ENCODE measurements at regions of chr6 and their contacts with region 1.

Region 1: DNA sequence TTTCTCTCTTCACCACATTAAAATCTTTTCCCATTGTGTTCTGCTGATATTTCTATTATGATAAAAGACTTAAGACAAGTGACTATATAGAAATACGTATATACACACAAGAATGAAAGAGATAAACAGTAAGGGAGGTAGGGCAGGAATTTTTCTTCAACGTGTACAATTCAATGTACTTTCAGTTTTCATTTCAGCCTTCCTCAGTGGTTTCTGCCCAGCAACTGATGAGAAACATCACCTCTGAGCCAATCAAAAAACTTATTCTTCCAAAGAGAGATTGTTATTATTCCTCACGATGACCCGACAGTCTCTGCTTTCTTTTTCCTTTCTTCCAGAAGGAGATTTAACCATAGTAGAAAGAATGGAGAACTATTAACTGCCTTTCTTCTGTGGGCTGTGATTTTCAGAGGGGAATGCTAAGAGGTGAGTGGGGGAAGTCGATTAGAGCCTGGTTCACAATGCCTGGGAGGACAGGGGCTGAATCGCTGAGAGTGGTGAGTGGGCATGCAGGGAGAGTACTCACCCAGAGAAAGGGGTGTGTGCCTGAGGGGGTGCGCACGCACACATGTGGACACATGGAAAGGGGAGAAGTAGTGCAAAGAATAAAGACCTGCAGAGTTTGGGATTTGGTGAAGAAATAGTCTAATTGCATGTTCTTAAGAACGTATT is at the start of gene BTN3A1:
- DNase-seq: peak; percentile 80 to 84 (median 81)
- H3K4me3 ChIP-seq: peak within 1 kb of the TSS; percentile 91 to 94
- H3K4me3 Mint-ChIP-seq: peak within 1 kb of the TSS; percentile 97 to 100 (median 99)
- H3K27ac ChIP-seq: peak within 1 kb of the TSS; percentile 89
- H3K27ac Mint-ChIP-seq: peak within 1 kb of the TSS; percentile 95 to 100 (median 99)
- H3K4me1 ChIP-seq: peaks cover 51% of the 10 kb centered on the region
- H3K4me1 Mint-ChIP-seq: peaks cover 41 to 58% (median 47%) of the 10 kb centered on the region in 4 donors
- H3K27me3 ChIP-seq: no peaks in the 10 kb centered on the region
- H3K27me3 Mint-ChIP-seq: no peaks in the 10 kb centered on the region
- total RNA-seq, gene BTN3A1: 255 to 262 TPM

Region 2: GRCh38 chr6:26322645-26323482 is 79.3 kb before region 1 on chr6:
- CTCF ChIA-PET with region 1: no interaction called
- POLR2A ChIA-PET with region 1: no interaction called
- intact Hi-C with region 1: no loop called
- DNase-seq: peak; percentile 75 to 80 (median 79)
- H3K4me3 ChIP-seq: peak overlapping the region in 1 of 2 donors; percentile 62
- H3K4me3 Mint-ChIP-seq: peak overlapping the region; percentile 86 to 92 (median 88)
- H3K27ac ChIP-seq: no peak overlapping the region
- H3K27ac Mint-ChIP-seq: peak overlapping the region; percentile 42 to 98 (median 82)
- H3K4me1 ChIP-seq: peaks cover 12% of the 10 kb centered on the region
- H3K4me1 Mint-ChIP-seq: peaks cover 19 to 30% (median 24%) of the 10 kb centered on the region in 4 donors
- H3K27me3 ChIP-seq: no peaks in the 10 kb centered on the region
- H3K27me3 Mint-ChIP-seq: peaks cover 8 to 22% of the 10 kb centered on the region in 2 donors

Region 3: DNA sequence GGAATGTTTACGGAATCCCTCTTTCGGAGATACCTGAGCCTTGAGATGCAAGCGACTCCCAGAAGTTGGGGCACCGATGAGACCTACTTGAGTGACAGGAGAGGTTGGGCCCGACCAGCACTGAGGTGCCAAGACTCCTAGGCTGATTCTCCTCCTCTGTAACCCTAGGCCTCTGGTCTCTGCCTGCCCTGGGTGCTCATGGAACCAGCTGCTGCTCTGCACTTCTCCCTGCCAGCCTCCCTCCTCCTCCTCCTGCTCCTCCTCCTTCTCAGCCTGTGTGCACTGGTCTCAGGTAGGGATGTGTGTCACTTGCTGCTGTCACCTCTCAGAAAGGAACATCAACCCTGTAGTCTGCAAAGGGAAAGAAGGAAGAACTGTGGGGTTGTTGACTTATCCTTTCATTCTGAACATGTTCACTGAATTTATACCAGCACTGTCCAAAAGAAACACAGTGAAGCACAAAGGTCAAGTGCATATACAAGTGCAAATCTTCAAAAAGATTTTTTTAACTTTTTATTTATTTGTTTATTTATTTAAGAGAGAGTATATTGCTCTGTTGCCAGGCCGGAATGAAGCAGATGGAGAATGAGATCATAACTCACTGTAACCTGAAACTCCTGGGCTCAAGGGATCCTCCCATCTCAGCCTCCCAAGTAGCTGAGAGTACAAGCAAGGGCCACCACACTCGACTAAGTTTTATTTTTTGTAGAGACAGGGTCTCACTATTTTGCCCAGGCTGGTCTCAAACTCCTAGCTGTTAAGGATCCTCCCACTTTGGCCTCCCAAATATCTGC is 18.3 kb before region 1 on chr6:
- CTCF ChIA-PET with region 1: no interaction called
- POLR2A ChIA-PET with region 1: interaction called, 4 read pairs
- intact Hi-C with region 1: loop called (anchors 2 kb)
- DNase-seq: no peak
- H3K4me3 ChIP-seq: peak overlapping the region; percentile 80 to 85
- H3K4me3 Mint-ChIP-seq: peak overlapping the region; percentile 98 to 100 (median 99)
- H3K27ac ChIP-seq: peak overlapping the region; percentile 88
- H3K27ac Mint-ChIP-seq: peak overlapping the region; percentile 70 to 100 (median 98)
- H3K4me1 ChIP-seq: peaks cover 10% of the 10 kb centered on the region
- H3K4me1 Mint-ChIP-seq: peaks cover 18 to 36% (median 31%) of the 10 kb centered on the region in 4 donors
- H3K27me3 ChIP-seq: no peaks in the 10 kb centered on the region
- H3K27me3 Mint-ChIP-seq: no peaks in the 10 kb centered on the region

Region 4: DNA sequence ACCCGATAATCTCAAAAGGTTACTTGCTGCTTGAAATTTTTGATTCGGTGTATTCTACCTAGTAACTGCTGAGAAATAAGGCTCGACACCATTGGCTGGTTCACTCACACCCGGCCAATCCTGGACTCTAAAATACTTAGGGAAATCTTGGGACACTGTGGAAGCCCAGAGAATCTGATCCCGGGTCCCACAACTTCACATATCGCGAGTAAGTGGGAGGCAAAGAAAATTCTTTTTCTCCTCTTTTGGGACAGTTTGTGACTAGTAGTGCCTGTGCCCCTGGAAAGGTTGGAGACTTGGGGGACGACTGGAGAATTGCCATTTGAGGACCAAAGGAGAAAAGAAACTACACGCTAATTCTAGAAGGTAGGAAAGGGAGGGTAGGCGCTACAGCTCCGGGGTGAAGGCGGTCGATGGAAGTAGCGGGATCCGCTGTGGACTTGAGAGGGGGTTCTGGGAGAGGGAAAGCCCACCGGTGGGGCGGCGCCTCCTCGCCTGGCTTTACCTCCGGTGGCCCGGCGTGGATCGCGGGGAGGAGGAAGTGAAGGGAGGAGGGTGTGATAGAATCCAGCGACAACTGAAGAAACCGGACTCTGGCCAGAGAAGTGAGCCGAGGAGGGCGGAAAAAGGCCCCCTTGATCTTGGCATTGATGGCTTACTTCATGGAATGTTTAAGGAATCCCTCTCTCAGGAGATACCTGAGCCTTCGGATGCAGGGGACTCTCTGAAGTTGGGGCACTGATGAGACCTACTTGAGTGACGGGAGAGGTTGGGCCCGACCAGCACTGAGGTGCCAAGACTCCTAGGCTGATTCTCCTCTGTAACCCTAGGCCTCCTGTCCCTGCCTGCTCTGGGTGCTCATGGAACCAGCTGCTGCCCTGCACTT is 19.4 kb after region 1 on chr6:
- CTCF ChIA-PET with region 1: no interaction called
- POLR2A ChIA-PET with region 1: interaction called, 3 read pairs
- intact Hi-C with region 1: loop called (anchors 2 kb)
- DNase-seq: peak; percentile 63 to 69 (median 67)
- H3K4me3 ChIP-seq: peak overlapping the region; percentile 86 to 97
- H3K4me3 Mint-ChIP-seq: no peak overlapping the region
- H3K27ac ChIP-seq: peak overlapping the region; percentile 65
- H3K27ac Mint-ChIP-seq: peak overlapping the region in 1 of 7 donors; percentile 90
- H3K4me1 ChIP-seq: peaks cover 10% of the 10 kb centered on the region
- H3K4me1 Mint-ChIP-seq: peaks cover 2 to 12% (median 5%) of the 10 kb centered on the region in 4 donors
- H3K27me3 ChIP-seq: no peaks in the 10 kb centered on the region
- H3K27me3 Mint-ChIP-seq: no peaks in the 10 kb centered on the region

Region 5: GRCh38 chr6:26439657-26440056 is 37.5 kb after region 1 on chr6:
- CTCF ChIA-PET with region 1: no interaction called
- POLR2A ChIA-PET with region 1: interaction called, 3 read pairs
- intact Hi-C with region 1: loop called (anchors 5 kb)
- DNase-seq: peak in 1 of 5 donors; percentile 31
- H3K4me3 ChIP-seq: peak overlapping the region in 1 of 2 donors; percentile 95
- H3K4me3 Mint-ChIP-seq: peak overlapping the region; percentile 93 to 100 (median 98)
- H3K27ac ChIP-seq: peak overlapping the region; percentile 97
- H3K27ac Mint-ChIP-seq: peak overlapping the region; percentile 97 to 100 (median 99)
- H3K4me1 ChIP-seq: peaks cover 37% of the 10 kb centered on the region
- H3K4me1 Mint-ChIP-seq: peaks cover 23 to 55% (median 45%) of the 10 kb centered on the region in 4 donors
- H3K27me3 ChIP-seq: no peaks in the 10 kb centered on the region
- H3K27me3 Mint-ChIP-seq: no peaks in the 10 kb centered on the region

Region 6: DNA sequence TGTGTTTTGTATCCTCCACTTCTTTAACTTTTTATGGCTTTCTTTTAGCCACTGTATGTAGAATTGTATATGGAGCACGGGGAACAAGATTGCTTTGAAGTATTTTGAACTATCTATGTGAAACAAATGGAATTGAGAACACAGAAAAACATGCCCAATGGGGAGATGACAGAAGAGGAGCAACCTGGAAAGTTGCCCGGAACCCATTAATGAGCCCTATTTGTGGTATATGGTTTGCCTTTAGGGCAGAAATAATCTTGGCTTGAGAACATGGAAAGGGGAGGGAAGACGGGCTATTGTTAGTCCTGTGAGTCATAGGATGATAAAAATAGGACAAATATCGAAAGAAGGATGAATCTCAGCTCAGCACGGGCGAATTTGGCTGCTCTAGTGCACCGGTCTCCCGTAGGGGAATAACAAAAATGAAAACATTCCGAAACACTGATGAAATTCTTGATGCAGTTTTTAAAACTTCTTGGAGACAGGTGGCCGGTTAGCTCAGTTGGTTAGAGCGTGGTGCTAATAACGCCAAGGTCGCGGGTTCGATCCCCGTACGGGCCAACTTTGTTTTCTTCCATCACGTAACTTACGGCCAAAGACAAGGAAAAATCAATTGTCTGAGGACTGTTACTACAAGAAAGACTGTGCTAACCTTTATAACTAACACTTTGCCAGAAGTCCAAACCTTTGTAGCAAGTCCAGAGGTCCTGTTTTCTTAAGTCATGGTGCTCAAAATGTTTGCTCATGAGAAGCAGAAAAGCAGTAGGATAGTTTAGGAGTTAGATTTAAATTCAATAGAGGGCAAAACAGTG is 151.7 kb after region 1 on chr6:
- CTCF ChIA-PET with region 1: no interaction called
- POLR2A ChIA-PET with region 1: interaction called, 3 read pairs
- intact Hi-C with region 1: loop called (anchors 5 kb)
- DNase-seq: peak; percentile 83 to 88 (median 86)
- H3K4me3 ChIP-seq: peak overlapping the region; percentile 67 to 93
- H3K4me3 Mint-ChIP-seq: no peak overlapping the region
- H3K27ac ChIP-seq: peak overlapping the region; percentile 31
- H3K27ac Mint-ChIP-seq: no peak overlapping the region
- H3K4me1 ChIP-seq: peaks cover 31% of the 10 kb centered on the region
- H3K4me1 Mint-ChIP-seq: peaks cover 11 to 28% (median 19%) of the 10 kb centered on the region in 4 donors
- H3K27me3 ChIP-seq: no peaks in the 10 kb centered on the region
- H3K27me3 Mint-ChIP-seq: peaks cover 0 to 2% of the 10 kb centered on the region in 2 donors

Measured in CD4-positive, alpha-beta memory T cell (primary cell).